GM23248 (cell line): ENCODE measurements at regions of chr13 and their contacts with region 1.

Region 1: DNA sequence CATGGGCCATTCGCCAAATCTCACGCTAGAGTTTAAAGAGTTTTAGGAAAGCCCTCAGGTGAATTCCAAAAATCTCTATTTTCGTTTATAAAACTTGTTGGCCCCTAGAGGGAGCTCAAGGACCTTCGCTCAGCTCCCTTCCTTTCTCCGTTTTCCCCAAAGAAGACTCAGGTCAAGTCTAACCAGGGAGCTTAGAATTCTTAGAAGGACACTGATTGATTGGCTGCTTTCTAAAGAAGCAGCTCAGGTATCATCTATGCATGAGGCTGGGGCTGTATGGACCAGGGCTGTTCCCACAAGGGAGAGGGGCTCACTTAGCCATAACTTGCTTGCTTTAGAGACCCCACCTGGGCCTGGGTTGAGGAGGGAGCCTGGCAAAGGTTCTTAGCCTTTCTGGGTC is 20.5 kb downstream of the DZIP1 start:
- DNase-seq: peak; percentile 73
- H3K4me3 ChIP-seq: no peak overlapping the region
- H3K27ac ChIP-seq: no peak overlapping the region
- H3K4me1 ChIP-seq: peaks cover 12% of the 10 kb centered on the region
- H3K27me3 ChIP-seq: no peaks in the 10 kb centered on the region

Region 2: GRCh38 chr13:95391362-95391761 is 232.7 kb before region 1 on chr13:
- in situ Hi-C with region 1: no loop called
- DNase-seq: no peak
- H3K4me3 ChIP-seq: no peak overlapping the region
- H3K27ac ChIP-seq: no peak overlapping the region
- H3K4me1 ChIP-seq: no peaks in the 10 kb centered on the region
- H3K27me3 ChIP-seq: peaks cover 6% of the 10 kb centered on the region; the same call in 1 of the 2 replicates

Region 3: DNA sequence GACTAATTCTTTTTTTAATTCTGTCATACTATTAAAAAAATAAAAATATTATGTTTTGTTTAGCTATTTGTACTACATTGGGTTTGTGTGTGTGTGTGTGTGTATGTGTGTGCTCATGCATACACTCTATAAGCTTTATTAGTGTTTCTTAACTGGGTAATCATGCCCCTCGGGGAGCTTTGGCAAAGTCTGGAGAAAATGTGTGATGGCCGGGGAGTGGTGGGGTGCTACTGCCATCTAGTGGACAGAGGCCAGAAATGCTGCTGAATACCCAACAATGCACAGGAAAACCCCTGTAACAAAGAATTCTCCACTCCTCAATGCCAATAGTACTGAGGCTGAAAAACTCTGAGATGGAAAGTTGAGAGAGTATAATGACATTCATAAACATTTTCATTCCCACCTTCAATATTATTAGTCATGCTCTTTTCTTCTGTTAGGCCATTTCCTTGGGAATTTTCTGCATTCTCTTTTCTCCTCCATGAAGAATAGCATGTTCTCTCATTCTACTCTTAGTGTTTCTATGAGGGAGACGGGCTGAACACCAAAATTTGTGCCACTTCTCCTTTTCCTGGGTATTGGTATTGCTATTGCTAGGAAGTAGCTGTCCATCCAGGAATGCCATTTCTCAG is 210.2 kb after region 1 on chr13:
- in situ Hi-C with region 1: loop called (anchors 25 kb)
- DNase-seq: peak; percentile 70
- H3K4me3 ChIP-seq: no peak overlapping the region
- H3K27ac ChIP-seq: no peak overlapping the region
- H3K4me1 ChIP-seq: peaks cover 13% of the 10 kb centered on the region
- H3K27me3 ChIP-seq: no peaks in the 10 kb centered on the region

Region 4: GRCh38 chr13:96500953-96501352 is 876.9 kb after region 1 on chr13:
- in situ Hi-C with region 1: no loop called
- DNase-seq: no peak
- H3K4me3 ChIP-seq: no peak overlapping the region
- H3K27ac ChIP-seq: no peak overlapping the region
- H3K4me1 ChIP-seq: no peaks in the 10 kb centered on the region
- H3K27me3 ChIP-seq: no peaks in the 10 kb centered on the region